ENCODE measurements at regions of chr3 and their contacts with region 1.

Region 1: DNA sequence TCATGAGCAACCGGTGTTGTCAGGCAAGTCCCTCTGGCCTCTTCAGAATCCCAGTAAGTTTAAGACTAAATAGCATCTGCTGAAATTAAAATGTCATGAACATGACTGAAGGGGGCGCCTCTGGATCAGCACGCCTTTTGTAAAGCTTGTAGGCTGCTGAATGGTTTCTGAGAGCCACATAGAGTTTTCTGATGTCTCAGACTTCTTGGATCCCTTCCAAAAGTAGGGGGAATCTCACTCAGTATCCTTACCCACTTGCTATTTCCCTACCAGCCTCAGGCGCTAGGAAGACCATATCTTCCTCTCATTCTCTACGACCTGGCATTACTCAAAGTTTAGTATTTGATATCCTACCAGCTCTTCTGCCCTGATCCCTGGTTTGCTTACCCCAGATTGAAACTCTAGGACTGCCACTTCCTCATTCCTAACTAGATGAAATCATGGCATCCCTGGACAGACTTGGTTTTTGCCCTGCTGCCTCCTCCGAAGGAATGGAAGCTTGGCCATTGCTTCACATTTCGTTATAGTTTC is 62.7 kb upstream of the CD47 start:
- DNase-seq: peak; percentile 46
- CTCF ChIP-seq: peak; percentile 25

Region 2: DNA sequence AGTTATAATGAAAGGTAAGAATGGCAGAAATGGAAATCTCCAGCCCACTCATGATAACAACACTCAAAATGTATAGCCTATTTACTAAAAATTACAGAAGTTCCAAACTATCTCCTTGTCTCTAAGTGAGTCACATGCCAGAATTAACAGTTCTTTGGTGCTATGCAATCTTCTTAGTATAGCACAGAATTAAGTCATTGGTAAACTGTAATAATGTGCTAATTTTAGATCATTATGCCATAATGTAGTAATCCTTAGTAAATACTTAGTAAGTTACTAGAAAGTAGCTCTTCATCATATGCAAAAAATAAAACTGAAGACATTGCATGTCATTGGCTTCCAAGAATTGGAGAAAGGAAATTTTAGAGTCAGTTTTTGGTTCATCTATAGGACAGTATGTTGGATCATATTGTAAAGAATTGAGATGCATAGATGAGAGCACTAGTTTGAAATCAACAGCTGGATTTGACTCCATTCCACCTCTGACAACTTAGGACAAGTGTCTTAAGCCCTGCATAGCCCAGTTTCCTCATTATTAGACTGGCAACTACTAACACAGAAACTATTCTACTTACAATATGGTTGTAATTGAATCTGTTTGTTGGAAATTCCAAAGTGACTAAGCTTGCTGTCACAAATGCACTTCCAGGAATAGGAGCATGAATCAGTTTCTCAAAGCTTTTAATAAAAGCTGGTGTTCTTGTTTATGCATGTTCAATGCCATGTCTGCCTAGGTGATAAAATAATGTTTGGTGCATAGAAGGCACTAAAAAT is 22.6 kb before region 1 on chr3:
- CTCF ChIA-PET with region 1: interaction called, 12 read pairs
- POLR2A ChIA-PET with region 1: no interaction called
- DNase-seq: no peak
- CTCF ChIP-seq: no peak

Region 3: GRCh38 chr3:108164391-108164790 is 10.9 kb after region 1 on chr3:
- CTCF ChIA-PET with region 1: interaction called, 14 read pairs
- POLR2A ChIA-PET with region 1: no interaction called
- DNase-seq: no peak
- CTCF ChIP-seq: no peak

Region 4: DNA sequence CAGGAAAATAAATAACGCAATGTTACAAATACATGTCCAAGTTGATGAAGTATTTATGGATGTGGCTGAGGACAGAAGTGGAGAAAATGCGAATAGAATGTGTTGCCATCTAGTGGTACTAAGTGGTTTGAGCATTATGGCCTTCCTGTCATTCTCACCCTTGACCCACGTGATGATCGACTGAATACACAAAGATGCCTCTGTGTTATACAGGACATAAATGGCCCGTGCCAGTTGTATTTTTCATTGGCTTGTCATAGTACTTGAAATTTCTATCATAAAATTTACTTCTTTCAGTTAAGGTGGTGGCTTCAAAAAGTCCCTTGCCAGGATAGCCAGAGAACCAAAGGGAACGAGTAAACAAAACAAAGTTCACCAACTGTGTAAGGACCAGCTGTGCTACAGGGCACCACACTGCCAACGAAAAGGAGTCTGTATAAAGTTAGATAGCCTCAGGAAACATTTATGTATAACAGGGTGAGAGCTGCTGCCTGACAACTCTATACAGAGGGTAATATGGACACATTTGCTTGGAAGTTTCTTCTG is 253.2 kb after region 1 on chr3:
- CTCF ChIA-PET with region 1: interaction called, 20 read pairs
- POLR2A ChIA-PET with region 1: no interaction called
- DNase-seq: peak; percentile 57
- CTCF ChIP-seq: peak; percentile 77